G401 (cell line): ENCODE measurements at regions of chr7 and their contacts with region 1.

Region 1: DNA sequence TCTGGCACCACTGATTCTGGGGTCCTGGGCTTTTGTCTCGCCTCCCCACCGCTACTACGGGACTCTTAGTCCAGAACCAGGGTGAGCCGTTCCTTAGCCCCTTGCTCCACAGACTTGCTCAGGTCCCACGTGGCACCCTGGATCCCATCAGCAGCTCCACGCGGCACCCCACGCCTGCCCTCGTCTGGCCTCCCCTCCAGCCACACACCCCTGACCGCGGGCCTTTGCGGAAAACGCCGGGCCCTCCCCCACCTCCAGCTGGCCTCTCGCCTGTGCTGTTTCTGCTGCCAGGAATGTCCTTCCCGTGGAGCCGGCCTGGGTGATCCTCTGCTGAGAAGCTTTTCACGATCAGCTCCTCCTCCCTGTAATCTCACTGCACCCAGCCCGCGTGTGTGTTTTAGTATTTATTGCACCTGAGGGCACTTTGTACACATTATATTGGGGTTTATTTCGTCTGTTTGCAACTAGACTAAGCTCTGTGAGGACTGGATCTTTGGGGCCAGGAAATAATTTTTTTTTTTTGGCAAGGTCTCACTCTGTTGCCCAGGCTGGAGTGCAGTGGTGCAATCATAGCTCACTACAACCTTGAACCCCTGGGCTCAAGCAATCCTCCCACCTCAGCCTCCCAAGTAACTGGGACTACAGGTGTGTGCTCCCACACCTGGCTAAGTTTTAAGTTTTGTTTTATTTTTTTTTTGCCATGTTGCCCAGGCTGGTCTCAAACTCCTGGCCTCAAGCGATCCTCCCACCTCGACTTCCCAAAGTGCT is 10.5 kb upstream of the TTYH3 start:
- DNase-seq: peak; percentile 54

Region 2: DNA sequence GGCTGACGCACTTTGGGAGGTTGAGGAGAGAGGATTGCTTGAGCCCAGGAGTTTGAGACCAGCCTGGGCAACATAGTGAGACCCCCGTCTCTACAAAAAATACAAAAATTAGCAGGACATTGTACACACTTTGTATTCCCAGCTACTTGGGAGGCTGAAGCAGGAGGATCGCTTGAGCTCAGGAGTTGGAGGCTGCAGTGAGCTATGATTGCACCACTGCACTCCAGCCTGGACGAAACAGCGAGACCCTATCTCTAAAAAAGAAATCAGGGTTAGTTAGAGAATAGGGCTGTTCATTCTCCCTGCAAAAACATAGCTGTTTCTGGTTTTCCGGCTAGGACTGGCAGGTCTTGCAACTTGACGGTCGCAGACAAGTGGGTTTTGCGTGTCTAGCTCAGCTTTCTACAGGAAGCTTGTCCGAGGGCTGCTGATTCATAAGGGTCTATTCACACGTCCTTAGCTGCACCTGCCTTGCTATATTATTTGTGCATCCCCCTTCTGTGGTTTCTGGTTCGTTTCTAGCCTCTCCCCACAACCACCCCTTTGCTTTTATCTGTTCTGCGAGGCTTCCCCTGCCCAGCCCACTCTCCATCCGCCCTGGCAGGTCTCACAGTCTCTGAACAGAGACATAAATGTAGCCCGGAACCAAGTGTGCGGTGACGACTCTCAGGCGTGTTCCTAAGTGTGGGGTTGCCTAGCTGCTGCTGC is 77.5 kb after region 1 on chr7:
- in situ Hi-C with region 1: loop called (anchors 5 kb)
- DNase-seq: no peak